ENCODE measurements at regions of chr18 and their contacts with region 1.

Region 1: DNA sequence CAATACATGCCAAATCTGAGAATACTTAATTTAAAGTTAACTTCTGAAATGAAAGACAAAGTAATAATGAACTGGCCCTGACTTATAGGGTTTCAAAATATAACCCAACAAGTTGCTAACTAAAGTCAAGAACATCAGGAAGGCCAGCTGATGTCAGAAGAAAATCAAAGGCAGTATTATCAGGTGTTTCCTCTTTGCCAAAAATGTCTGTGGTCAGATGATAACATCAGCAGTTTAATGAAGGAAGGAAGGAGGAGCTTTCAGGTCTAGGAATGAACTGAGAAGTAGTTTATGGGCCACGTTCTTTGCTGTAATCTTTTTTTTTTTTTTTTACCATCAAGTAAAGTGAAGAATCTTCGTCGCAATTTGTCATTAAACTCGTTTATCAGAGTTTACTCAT is 40.9 kb downstream of the CDH2 start:
- DNase-seq: no peak
- H3K4me3 ChIP-seq: no peak overlapping the region
- H3K27ac ChIP-seq: no peak overlapping the region
- H3K4me1 ChIP-seq: no peaks in the 10 kb centered on the region
- H3K27me3 ChIP-seq: no peaks in the 10 kb centered on the region
- CTCF ChIP-seq: no peak
- EP300 ChIP-seq: no peak
- POLR2A ChIP-seq: no peak

Region 2: DNA sequence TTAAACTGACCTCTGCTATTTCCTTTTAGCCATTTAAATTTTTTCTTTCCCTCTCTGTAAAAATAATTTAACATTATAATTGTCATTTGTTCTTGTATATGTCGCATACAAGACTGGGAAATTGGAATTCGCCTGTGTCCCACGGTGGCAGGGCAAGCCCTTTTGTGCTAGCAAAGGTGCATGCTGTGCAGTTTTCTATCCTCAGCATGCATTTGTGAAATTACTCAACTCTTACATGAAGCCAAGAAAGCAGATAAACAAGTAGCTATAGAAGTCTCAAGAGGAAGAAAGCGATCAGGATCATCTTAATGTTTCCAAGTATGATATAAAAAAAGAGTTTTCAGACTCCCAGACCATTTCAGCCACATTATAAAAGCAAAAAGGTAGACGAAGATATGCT is 558.3 kb before region 1 on chr18:
- in situ Hi-C with region 1: no loop called
- intact Hi-C with region 1: loop called (anchors 5 kb)
- DNase-seq: no peak
- H3K4me3 ChIP-seq: no peak overlapping the region
- H3K27ac ChIP-seq: no peak overlapping the region
- H3K4me1 ChIP-seq: no peaks in the 10 kb centered on the region
- H3K27me3 ChIP-seq: no peaks in the 10 kb centered on the region
- CTCF ChIP-seq: no peak
- EP300 ChIP-seq: no peak
- POLR2A ChIP-seq: no peak

Measured in transverse colon (tissue), 4 donors.